CD8-positive, alpha-beta memory T cell (primary cell): ENCODE measurements at regions of chr10 and their contacts with region 1.

Region 1: DNA sequence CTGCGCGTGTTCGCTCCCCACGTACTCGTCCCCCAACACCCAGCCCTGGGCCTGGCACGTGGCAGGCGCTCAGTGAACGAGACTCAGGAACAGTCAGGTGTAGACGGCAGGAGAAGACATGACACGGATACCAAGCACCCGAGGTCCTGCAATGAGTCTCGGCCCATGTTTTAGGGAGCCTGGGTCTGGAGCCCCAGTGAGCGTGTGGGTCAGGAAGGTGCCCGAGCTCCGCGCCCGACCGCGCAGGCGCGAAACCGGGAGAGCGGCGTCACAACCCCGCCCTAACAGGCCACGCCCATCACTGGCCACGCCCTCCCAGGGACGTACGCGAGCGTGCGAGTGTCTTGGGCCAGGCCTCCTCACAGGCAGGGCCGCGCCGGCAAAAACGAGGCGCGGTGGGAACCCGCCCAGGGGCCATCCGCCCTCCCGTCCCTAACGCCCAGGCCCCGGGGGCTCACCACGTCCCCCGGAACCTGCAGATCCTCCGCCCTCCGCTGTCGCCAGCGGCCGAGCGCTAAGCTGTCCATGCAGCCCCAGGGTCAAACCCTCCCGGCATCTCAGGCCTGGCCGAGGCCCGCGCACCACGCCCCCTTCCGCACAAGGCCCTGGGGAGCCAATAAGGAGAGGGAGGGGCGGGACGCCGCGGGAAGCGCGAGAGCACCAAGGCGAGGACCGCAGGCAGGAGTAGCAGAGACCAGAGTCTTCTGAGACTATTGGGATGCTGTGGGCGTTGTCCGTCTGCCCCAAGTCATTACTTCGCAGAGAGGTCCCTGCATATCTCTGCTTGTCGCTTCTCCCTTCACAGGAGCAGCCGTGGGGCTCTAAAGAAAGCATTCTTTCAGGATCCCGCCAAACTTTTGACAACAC is at the start of gene C10orf143:
- DNase-seq: peak; percentile 97 to 100 (median 98)
- H3K4me3 ChIP-seq: peak within 1 kb of the TSS; percentile 85
- H3K4me3 Mint-ChIP-seq: peak within 1 kb of the TSS; percentile 95 to 100 (median 99)
- H3K27ac ChIP-seq: peak within 1 kb of the TSS; percentile 87
- H3K27ac Mint-ChIP-seq: peak within 1 kb of the TSS; percentile 95 to 99 (median 98)
- H3K4me1 ChIP-seq: peaks cover 23% of the 10 kb centered on the region
- H3K4me1 Mint-ChIP-seq: peaks cover 52 to 62% (median 60%) of the 10 kb centered on the region in 3 donors
- H3K27me3 ChIP-seq: no peaks in the 10 kb centered on the region
- H3K27me3 Mint-ChIP-seq: no peaks in the 10 kb centered on the region
- total RNA-seq, gene C10orf143: 5.7 to 6.7 TPM

Region 2: GRCh38 chr10:130127364-130128061 is 17.0 kb after region 1 on chr10:
- CTCF ChIA-PET with region 1: interaction called, 34 read pairs
- POLR2A ChIA-PET with region 1: interaction called, 4 read pairs
- DNase-seq: peak; percentile 36 to 68 (median 47)
- H3K4me3 ChIP-seq: no peak overlapping the region
- H3K4me3 Mint-ChIP-seq: peak overlapping the region in 1 of 7 donors; percentile 48
- H3K27ac ChIP-seq: no peak overlapping the region
- H3K27ac Mint-ChIP-seq: peak overlapping the region in 2 of 8 donors; percentile 10 to 13
- H3K4me1 ChIP-seq: peaks cover 4% of the 10 kb centered on the region
- H3K4me1 Mint-ChIP-seq: peaks cover 6 to 10% (median 6%) of the 10 kb centered on the region in 3 donors
- H3K27me3 ChIP-seq: peaks cover 7% of the 10 kb centered on the region
- H3K27me3 Mint-ChIP-seq: peaks cover 19 to 41% of the 10 kb centered on the region in 2 donors

Region 3: GRCh38 chr10:130136226-130137089 is 26.0 kb after region 1 on chr10 and contains the start of gene GLRX3:
- CTCF ChIA-PET with region 1: interaction called, 65 read pairs
- POLR2A ChIA-PET with region 1: interaction called, 69 read pairs
- DNase-seq: peak; percentile 82 to 92 (median 88)
- H3K4me3 ChIP-seq: peak within 1 kb of the TSS; percentile 73
- H3K4me3 Mint-ChIP-seq: peak within 1 kb of the TSS; percentile 87 to 98 (median 91)
- H3K27ac ChIP-seq: peak within 1 kb of the TSS; percentile 70
- H3K27ac Mint-ChIP-seq: peak within 1 kb of the TSS; percentile 68 to 97 (median 86)
- H3K4me1 ChIP-seq: peaks cover 41% of the 10 kb centered on the region
- H3K4me1 Mint-ChIP-seq: peaks cover 36 to 52% (median 49%) of the 10 kb centered on the region in 3 donors
- H3K27me3 ChIP-seq: no peaks in the 10 kb centered on the region
- H3K27me3 Mint-ChIP-seq: peaks cover 9 to 17% of the 10 kb centered on the region in 2 donors
- total RNA-seq, gene GLRX3: 155 to 169 TPM